ENCODE measurements at regions of chr4 and their contacts with region 1.

Region 1: GRCh38 chr4:186725469-186726425 is 2.1 kb upstream of the FAT1 start:
- DNase-seq: peak in 1 of 2 donors; percentile 36
- ATAC-seq: peak in 1 of 2 donors; percentile 32
- H3K4me3 ChIP-seq: peak overlapping the region; percentile 62 to 75 (median 68)
- H3K27ac ChIP-seq: peak overlapping the region; percentile 64 to 79 (median 70)
- H3K4me1 ChIP-seq: peaks cover 0 to 12% of the 10 kb centered on the region in 2 donors
- H3K27me3 ChIP-seq: peaks cover 17 to 55% (median 46%) of the 10 kb centered on the region in 3 donors
- CTCF ChIP-seq: peak in 3 of 5 experiments; percentile 21 to 41 (median 34)
- POLR2A ChIP-seq: no peak

Region 2: DNA sequence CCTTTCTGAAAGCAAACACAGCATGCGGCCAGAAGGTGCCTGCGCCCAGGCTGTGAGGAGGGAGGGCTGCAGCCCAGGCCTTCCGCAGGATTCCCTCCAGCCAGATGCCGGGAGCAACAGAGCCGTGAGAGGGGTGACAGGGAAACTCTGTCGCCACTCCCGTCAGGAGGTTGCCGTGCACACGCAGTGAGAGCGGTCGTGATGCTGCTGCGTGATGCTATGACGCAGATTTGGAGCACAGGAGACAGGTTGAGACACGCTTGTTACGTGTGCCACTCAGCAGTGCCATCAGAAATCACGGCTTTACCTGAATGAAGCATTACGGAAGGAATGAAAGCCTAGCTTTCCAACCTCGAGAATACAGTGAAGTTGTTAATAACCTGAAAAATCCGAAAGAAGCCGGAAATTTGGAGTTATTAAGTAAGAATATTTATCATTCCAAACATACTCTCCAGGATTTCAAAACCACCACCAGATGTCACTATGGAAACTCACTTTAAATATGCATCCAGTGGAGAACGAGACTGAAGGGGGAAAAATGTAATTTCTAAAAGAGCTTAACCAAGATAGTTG is 56.5 kb before region 1 on chr4:
- in situ Hi-C with region 1: no loop called
- intact Hi-C with region 1: loop called (anchors 1 kb)
- DNase-seq: no peak
- ATAC-seq: no peak
- H3K4me3 ChIP-seq: no peak overlapping the region
- H3K27ac ChIP-seq: no peak overlapping the region
- H3K4me1 ChIP-seq: peaks cover 0 to 6% of the 10 kb centered on the region in 2 donors
- H3K27me3 ChIP-seq: no peaks in the 10 kb centered on the region
- CTCF ChIP-seq: peak in 1 of 5 experiments; percentile 31
- POLR2A ChIP-seq: no peak

Region 3: DNA sequence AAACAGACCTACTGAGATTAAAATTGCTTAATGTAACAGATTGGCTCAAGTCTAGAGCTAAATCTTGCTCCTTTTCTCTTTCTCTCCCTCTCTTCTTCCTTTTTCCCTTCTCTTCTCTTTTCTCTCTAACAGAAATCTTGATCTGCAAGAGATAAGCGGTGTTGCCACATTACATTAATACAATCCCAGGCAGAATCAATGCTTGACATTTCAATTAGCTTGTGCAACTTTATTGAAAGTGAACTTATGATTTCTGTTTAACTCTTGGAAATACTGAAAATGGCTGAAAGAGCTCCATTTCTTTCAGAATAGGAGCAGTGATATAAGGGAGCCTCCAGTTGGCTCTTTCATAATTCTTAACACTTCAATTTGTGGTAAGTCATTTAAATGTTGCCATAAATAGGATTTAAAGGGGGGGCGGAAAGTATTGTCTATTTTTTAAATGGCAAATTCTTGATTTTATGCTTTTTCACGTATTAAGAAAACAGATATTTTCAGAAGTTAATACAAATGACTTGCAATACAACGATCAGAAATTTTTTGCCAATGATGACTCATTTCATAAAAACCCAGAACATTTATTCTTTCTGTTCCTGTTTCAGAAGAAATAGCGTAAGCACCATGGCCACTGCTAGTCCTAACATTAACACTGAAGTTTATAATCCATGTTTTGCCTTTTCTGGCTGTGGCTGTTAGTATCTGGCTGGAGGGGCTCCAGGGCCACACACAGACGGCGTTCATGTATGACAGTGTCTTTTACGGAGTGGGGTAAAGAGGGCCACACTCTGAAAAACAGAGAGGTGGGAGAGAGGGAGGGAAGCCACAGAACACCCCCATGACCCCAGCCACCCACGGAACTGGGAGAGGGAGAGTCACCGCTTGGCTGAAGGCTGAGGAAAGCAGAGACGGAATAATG is 113.6 kb after region 1 on chr4:
- in situ Hi-C with region 1: no loop called
- intact Hi-C with region 1: loop called (anchors 10 kb)
- DNase-seq: no peak
- ATAC-seq: peak; percentile 41 to 51
- H3K4me3 ChIP-seq: peak overlapping the region; percentile 13 to 31 (median 22)
- H3K27ac ChIP-seq: peak overlapping the region; percentile 66 to 76 (median 68)
- H3K4me1 ChIP-seq: peaks cover 0 to 3% of the 10 kb centered on the region in 2 donors
- H3K27me3 ChIP-seq: no peaks in the 10 kb centered on the region
- CTCF ChIP-seq: no peak
- POLR2A ChIP-seq: no peak

Region 4: DNA sequence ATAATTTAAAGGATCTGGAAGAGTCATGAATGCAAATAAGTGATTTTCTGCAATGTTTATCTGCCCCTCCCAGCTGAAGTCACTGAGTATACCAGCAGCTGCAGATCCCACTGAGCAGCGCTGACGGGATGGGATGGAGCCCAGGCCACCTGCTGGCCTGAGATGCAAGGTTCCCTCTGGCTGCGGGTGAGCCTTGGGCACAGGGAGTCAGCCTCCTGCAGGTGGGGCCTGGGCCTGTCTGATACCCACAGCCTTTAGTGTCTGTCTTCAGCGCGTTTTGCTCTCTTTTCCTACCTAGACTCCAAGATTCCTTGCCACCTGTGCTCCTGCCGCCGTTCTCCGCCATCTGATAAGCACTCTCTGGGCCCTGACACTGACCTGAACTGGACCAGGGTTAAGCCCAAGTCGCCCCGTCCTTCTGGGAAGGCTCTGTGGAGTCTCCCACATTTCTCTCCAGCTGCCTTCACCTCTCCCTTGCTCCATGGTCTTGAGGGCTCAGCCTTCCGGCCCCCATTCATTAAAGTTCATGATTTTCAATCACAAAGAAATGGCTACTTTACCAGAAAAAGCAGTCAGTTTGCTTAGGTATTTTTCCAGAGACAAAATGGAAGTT is 221.0 kb after region 1 on chr4:
- in situ Hi-C with region 1: no loop called
- intact Hi-C with region 1: loop called (anchors 10 kb)
- DNase-seq: no peak
- ATAC-seq: no peak
- H3K4me3 ChIP-seq: no peak overlapping the region
- H3K27ac ChIP-seq: no peak overlapping the region
- H3K4me1 ChIP-seq: no peaks in the 10 kb centered on the region
- H3K27me3 ChIP-seq: no peaks in the 10 kb centered on the region
- CTCF ChIP-seq: no peak
- POLR2A ChIP-seq: no peak

Region 5: DNA sequence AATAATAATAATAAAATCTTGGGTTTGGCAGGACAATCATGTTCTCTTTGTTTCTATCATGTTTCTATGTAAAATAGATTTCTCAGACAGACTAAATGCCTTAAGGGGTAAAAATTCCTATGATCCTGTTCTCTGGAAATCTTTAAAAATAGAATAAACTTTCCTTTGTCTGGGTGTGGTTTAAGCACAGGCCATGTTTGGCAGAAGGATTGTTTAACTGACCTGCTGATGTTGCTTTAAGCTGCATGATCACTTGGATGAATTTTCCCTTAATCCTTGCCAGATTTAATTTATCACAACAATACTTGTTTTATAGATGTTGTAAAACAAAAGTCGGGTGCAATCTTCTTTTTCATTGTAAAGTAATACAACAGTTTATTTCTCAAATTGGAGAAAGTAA is 339.6 kb after region 1 on chr4:
- in situ Hi-C with region 1: no loop called
- intact Hi-C with region 1: no loop called
- DNase-seq: no peak
- ATAC-seq: no peak
- H3K4me3 ChIP-seq: no peak overlapping the region
- H3K27ac ChIP-seq: no peak overlapping the region
- H3K4me1 ChIP-seq: no peaks in the 10 kb centered on the region
- H3K27me3 ChIP-seq: no peaks in the 10 kb centered on the region
- CTCF ChIP-seq: no peak
- POLR2A ChIP-seq: no peak